Naive thymus-derived CD4-positive, alpha-beta T cell (primary cell): ENCODE measurements at regions of chr20 and their contacts with region 1.

Region 1: GRCh38 chr20:59222253-59223181 is 58.9 kb downstream of the ZNF831 start:
- DNase-seq: peak; percentile 75 to 90 (median 82)
- ATAC-seq: peak; percentile 95
- H3K4me3 ChIP-seq: peak overlapping the region; percentile 54
- H3K4me3 Mint-ChIP-seq: peak overlapping the region; percentile 71 to 92 (median 86)
- H3K27ac ChIP-seq: peak overlapping the region; percentile 62
- H3K27ac Mint-ChIP-seq: peak overlapping the region; percentile 63 to 94 (median 90)
- H3K4me1 ChIP-seq: peaks cover 5 to 13% of the 10 kb centered on the region in 2 donors
- H3K4me1 Mint-ChIP-seq: peaks cover 14 to 43% (median 32%) of the 10 kb centered on the region in 7 donors
- H3K27me3 ChIP-seq: no peaks in the 10 kb centered on the region
- H3K27me3 Mint-ChIP-seq: peaks cover 0 to 14% (median 0%) of the 10 kb centered on the region in 5 donors

Region 2: DNA sequence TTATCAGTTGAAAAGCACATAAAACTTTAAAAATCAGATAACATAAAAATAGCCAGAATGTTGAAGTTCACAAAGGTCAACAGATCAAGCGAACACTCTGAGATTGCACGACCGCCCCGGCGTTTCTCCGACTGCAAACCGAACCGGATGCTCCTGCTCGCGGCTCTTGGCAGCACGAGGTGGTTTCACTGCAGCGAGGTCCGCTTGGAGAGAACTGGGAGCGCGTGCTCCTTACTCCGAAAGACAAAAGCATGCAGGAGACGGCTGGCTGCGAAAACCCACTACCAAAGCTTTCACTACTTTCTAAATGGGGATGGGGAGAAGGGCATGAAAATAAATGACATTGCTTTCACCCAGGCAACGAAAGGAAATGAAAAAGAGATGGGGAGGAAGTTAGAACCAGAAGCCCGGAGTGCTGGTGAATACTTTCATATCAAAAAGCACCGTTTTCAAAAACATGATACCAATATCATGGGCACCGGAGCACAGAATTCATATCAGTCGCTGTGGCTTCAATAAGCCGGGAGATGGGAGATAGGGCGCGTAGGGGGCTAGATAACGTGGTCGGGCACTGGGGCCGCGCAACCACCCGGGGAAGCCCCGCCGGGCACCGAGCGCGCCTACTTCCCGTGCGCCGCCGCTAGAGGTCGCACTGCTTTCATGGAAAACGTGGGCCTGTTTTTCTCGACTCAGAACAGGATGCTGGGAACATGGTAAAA is 985.7 kb before region 1 on chr20:
- CTCF ChIA-PET with region 1: no interaction called
- POLR2A ChIA-PET with region 1: no interaction called
- intact Hi-C with region 1: loop called in 1 of 2 experiments (anchors 1 kb)
- DNase-seq: peak; percentile 62 to 90 (median 80)
- ATAC-seq: peak; percentile 96
- H3K4me3 ChIP-seq: peak overlapping the region; percentile 65
- H3K4me3 Mint-ChIP-seq: peak overlapping the region; percentile 77 to 94 (median 92)
- H3K27ac ChIP-seq: peak overlapping the region; percentile 76
- H3K27ac Mint-ChIP-seq: peak overlapping the region; percentile 71 to 96 (median 91)
- H3K4me1 ChIP-seq: no peaks in the 10 kb centered on the region
- H3K4me1 Mint-ChIP-seq: peaks cover 2 to 25% (median 17%) of the 10 kb centered on the region in 7 donors
- H3K27me3 ChIP-seq: no peaks in the 10 kb centered on the region
- H3K27me3 Mint-ChIP-seq: no peaks in the 10 kb centered on the region

Region 3: GRCh38 chr20:58870239-58871014 is 352.1 kb before region 1 on chr20:
- CTCF ChIA-PET with region 1: interaction called, 6 read pairs
- POLR2A ChIA-PET with region 1: no interaction called
- intact Hi-C with region 1: loop called (anchors 1 kb)
- DNase-seq: peak in 6 of 9 donors; percentile 35 to 63 (median 52)
- ATAC-seq: peak; percentile 84
- H3K4me3 ChIP-seq: no peak overlapping the region
- H3K4me3 Mint-ChIP-seq: no peak overlapping the region
- H3K27ac ChIP-seq: no peak overlapping the region
- H3K27ac Mint-ChIP-seq: peak overlapping the region in 2 of 9 donors; percentile 28 to 62
- H3K4me1 ChIP-seq: no peaks in the 10 kb centered on the region
- H3K4me1 Mint-ChIP-seq: peaks cover 0 to 13% (median 3%) of the 10 kb centered on the region in 7 donors
- H3K27me3 ChIP-seq: peaks cover 0 to 3% of the 10 kb centered on the region in 2 donors
- H3K27me3 Mint-ChIP-seq: peaks cover 0 to 22% (median 0%) of the 10 kb centered on the region in 5 donors

Region 4: DNA sequence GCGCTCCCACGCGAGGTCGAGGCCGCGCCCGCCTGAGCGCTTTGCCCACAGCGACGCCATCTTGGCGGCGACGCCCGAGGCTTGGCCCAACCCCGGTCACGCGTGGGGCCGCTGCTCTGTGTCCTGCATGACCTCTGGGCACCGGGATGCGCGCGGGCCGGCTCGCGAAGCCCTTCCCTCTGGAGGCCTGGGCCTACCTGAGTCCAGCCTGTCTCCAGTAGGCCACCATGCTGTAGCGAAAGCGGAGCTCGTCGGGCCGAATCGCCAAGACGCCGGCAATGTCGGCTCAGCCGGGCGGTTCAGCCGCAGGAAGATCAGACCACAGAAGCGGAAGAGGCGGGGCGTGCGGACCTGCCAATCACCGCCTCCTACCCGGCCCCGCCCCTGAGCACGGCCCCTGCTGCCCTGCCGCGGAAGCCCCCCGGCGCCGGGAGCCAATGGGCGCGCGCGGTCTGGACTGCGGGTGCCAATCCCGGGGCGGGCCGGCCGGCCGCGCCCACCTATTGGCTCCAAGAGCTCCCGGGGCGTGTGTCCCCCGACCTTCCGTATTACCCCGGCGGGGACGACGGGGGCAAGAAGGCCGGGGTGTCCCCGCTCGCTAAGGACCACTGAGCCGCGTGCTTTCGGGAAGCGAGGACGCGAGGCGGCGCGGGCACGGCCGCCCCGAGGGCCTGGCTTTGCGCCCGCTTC is 190.3 kb before region 1 on chr20 and contains the start of gene ATP5F1E:
- CTCF ChIA-PET with region 1: no interaction called
- POLR2A ChIA-PET with region 1: interaction called, 7 read pairs
- intact Hi-C with region 1: loop called in 1 of 2 experiments (anchors 1 kb)
- DNase-seq: peak; percentile 94 to 98 (median 96)
- ATAC-seq: peak; percentile 98
- H3K4me3 ChIP-seq: peak within 1 kb of the TSS; percentile 62
- H3K4me3 Mint-ChIP-seq: peak within 1 kb of the TSS; percentile 87 to 96 (median 94)
- H3K27ac ChIP-seq: peak within 1 kb of the TSS; percentile 85
- H3K27ac Mint-ChIP-seq: peak within 1 kb of the TSS; percentile 86 to 98 (median 94)
- H3K4me1 ChIP-seq: peaks cover 40 to 44% of the 10 kb centered on the region in 2 donors
- H3K4me1 Mint-ChIP-seq: peaks cover 40 to 62% (median 56%) of the 10 kb centered on the region in 7 donors
- H3K27me3 ChIP-seq: no peaks in the 10 kb centered on the region
- H3K27me3 Mint-ChIP-seq: no peaks in the 10 kb centered on the region
- total RNA-seq, gene ATP5F1E: 57.0 to 81.7 (median 67.4) TPM

Region 5: GRCh38 chr20:59087829-59088433 is 134.6 kb before region 1 on chr20:
- CTCF ChIA-PET with region 1: interaction called, 23 read pairs
- POLR2A ChIA-PET with region 1: no interaction called
- intact Hi-C with region 1: loop called (anchors 1 kb)
- DNase-seq: peak; percentile 67 to 85 (median 78)
- ATAC-seq: peak; percentile 92
- H3K4me3 ChIP-seq: no peak overlapping the region
- H3K4me3 Mint-ChIP-seq: no peak overlapping the region
- H3K27ac ChIP-seq: no peak overlapping the region
- H3K27ac Mint-ChIP-seq: peak overlapping the region in 4 of 9 donors; percentile 10 to 58 (median 40)
- H3K4me1 ChIP-seq: peaks cover 0 to 5% of the 10 kb centered on the region in 2 donors
- H3K4me1 Mint-ChIP-seq: peaks cover 0 to 7% (median 5%) of the 10 kb centered on the region in 7 donors
- H3K27me3 ChIP-seq: no peaks in the 10 kb centered on the region
- H3K27me3 Mint-ChIP-seq: peaks cover 0 to 32% (median 0%) of the 10 kb centered on the region in 5 donors

Region 6: GRCh38 chr20:59159493-59160376 is 62.8 kb before region 1 on chr20:
- CTCF ChIA-PET with region 1: no interaction called
- POLR2A ChIA-PET with region 1: interaction called, 4 read pairs
- intact Hi-C with region 1: loop called in 1 of 2 experiments (anchors 1 kb)
- DNase-seq: peak in 8 of 9 donors; percentile 50 to 86 (median 82)
- ATAC-seq: peak; percentile 93
- H3K4me3 ChIP-seq: peak overlapping the region; percentile 55
- H3K4me3 Mint-ChIP-seq: peak overlapping the region; percentile 76 to 93 (median 89)
- H3K27ac ChIP-seq: peak overlapping the region; percentile 93
- H3K27ac Mint-ChIP-seq: peak overlapping the region; percentile 95 to 99 (median 98)
- H3K4me1 ChIP-seq: peaks cover 55 to 79% of the 10 kb centered on the region in 2 donors
- H3K4me1 Mint-ChIP-seq: peaks cover 49 to 95% (median 89%) of the 10 kb centered on the region in 7 donors
- H3K27me3 ChIP-seq: no peaks in the 10 kb centered on the region
- H3K27me3 Mint-ChIP-seq: no peaks in the 10 kb centered on the region

Region 7: DNA sequence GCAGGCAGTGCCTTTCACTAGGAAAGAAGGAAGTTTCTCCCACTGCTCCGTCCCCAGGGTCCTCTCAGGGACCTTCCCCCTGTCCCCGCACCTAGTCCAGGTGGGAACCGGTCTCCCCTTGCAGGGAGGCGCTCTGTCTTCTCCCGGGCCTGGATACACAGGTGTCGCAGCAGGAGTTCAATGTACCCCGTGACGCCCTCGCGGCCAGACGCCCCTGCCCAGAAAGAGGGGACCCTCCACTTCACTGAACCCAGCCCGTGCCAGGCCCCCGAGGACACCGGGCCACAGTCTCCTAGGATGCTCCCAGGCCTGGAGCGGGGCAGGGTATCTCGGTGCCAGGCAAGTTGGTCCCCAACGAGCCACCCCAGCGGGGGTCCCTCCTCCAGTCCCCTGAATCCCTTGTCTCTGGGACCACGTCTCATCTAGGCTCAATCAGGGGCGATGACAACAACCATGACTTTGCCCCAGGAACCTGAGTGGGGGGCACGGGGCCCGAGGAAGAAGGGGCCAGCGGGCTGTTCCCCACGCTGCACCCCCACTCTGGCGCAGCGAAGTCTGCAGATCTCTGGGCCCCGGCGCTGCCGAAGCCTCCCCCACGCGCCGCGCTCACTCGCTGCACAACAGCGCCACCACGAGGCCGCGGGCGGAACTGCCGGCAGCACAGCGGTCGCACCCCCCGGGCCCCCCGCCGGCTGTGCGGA is 180.9 kb after region 1 on chr20:
- CTCF ChIA-PET with region 1: interaction called, 4 read pairs
- POLR2A ChIA-PET with region 1: interaction called, 3 read pairs
- intact Hi-C with region 1: loop called (anchors 1 to 2 kb)
- DNase-seq: peak; percentile 65 to 91 (median 77)
- ATAC-seq: peak; percentile 93
- H3K4me3 ChIP-seq: peak overlapping the region; percentile 53
- H3K4me3 Mint-ChIP-seq: peak overlapping the region in 1 of 10 donors; percentile 59
- H3K27ac ChIP-seq: peak overlapping the region; percentile 41
- H3K27ac Mint-ChIP-seq: peak overlapping the region in 4 of 9 donors; percentile 49 to 94 (median 85)
- H3K4me1 ChIP-seq: peaks cover 12 to 35% of the 10 kb centered on the region in 2 donors
- H3K4me1 Mint-ChIP-seq: peaks cover 0 to 4% (median 2%) of the 10 kb centered on the region in 7 donors
- H3K27me3 ChIP-seq: peaks cover 0 to 7% of the 10 kb centered on the region in 2 donors
- H3K27me3 Mint-ChIP-seq: peaks cover 0 to 18% (median 3%) of the 10 kb centered on the region in 5 donors